Activated naive CD4-positive, alpha-beta T cell treated with anti-CD3 and anti-CD28 coated beads for 36 hours (primary cell): ENCODE measurements at regions of chr2 and their contacts with region 1.

Region 1: DNA sequence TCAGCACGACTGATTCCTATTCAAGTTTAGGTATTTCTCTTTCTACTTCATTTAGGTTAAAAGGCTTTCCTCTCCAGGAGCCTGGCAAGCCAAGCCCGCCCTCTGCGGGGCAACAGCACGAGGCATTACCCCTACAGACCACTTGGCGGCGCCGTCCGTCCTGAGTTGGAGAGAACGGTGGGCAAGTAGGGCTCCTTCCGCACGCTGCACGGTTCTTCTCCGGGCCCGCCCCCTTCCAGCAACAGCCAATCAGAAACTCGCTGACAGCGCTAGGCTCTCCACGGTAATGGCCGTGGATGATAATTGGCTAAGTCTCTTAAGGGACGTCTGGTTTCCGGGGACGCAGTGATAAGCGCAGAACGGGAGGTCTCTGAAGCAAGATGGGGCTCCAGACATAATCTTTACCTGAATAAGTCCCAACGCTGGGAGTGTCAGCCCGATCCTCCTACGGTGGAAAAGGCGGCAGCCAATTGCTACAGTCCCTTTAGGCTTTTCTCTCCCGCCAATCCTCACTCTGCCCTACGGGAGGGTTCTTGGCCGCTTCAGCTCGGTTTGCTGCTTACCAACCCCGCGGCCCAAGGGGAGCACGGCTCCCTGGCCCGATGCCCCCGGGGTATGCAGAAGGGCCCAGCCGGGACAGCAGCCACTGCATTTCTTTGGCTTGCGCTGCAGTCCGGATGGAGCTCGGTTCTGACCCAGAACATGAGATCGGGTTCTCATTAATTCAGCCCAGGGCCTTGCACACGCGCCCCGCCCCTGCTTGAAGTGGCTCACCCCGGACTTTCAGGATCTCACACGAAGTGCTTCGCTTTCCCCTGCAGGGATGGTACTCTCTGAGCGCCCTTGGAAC is 206.9 kb upstream of the PKDCC start:
- DNase-seq: peak; percentile 99
- H3K4me3 Mint-ChIP-seq: peak overlapping the region; percentile 92
- H3K27ac Mint-ChIP-seq: peak overlapping the region; percentile 86
- H3K4me1 Mint-ChIP-seq: peaks cover 5% of the 10 kb centered on the region
- H3K27me3 Mint-ChIP-seq: peaks cover 12% of the 10 kb centered on the region

Region 2: GRCh38 chr2:41853427-41854216 is 12.7 kb after region 1 on chr2:
- CTCF ChIA-PET with region 1: interaction called, 31 read pairs
- intact Hi-C with region 1: loop called (anchors 1 kb)
- DNase-seq: peak; percentile 27
- H3K4me3 Mint-ChIP-seq: no peak overlapping the region
- H3K27ac Mint-ChIP-seq: no peak overlapping the region
- H3K4me1 Mint-ChIP-seq: peaks cover 17% of the 10 kb centered on the region
- H3K27me3 Mint-ChIP-seq: peaks cover 16% of the 10 kb centered on the region

Region 3: GRCh38 chr2:41869542-41870264 is 28.8 kb after region 1 on chr2:
- CTCF ChIA-PET with region 1: interaction called, 38 read pairs
- intact Hi-C with region 1: loop called (anchors 1 kb)
- DNase-seq: peak; percentile 81
- H3K4me3 Mint-ChIP-seq: no peak overlapping the region
- H3K27ac Mint-ChIP-seq: no peak overlapping the region
- H3K4me1 Mint-ChIP-seq: no peaks in the 10 kb centered on the region
- H3K27me3 Mint-ChIP-seq: no peaks in the 10 kb centered on the region

Region 4: GRCh38 chr2:42086500-42086953 is 245.6 kb after region 1 on chr2:
- CTCF ChIA-PET with region 1: interaction called, 43 read pairs
- intact Hi-C with region 1: loop called (anchors 1 kb)
- DNase-seq: peak; percentile 59
- H3K4me3 Mint-ChIP-seq: no peak overlapping the region
- H3K27ac Mint-ChIP-seq: no peak overlapping the region
- H3K4me1 Mint-ChIP-seq: peaks cover 4% of the 10 kb centered on the region
- H3K27me3 Mint-ChIP-seq: no peaks in the 10 kb centered on the region

Region 5: DNA sequence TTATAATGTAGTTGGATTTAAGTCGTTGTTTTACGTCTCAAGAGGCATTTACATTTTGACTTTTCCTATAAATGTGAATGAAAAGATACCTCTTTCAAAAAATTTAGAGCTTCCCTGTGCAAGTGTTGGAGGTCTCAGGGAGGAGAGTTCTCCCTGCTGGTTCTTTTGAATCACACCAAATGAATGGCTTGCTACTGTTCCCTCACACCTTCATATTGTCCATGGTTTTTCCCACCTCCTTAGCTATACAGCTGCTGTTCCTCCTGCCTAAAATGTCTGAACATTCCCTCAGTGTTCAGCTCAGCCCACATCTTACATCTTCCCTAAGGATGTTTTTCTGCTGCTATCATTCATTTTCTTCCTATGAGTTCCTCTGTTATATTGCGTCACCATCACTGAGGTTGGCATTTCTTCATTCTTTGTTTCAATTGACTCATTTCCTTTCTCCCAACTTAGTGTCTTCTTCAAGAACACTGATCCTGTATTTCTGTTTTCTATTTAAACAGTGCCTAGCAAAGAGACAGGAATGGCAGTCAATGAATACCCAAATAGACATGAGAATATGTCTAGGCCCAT is 474.1 kb after region 1 on chr2:
- CTCF ChIA-PET with region 1: no interaction called
- intact Hi-C with region 1: loop called (anchors 1 kb)
- DNase-seq: no peak
- H3K4me3 Mint-ChIP-seq: no peak overlapping the region
- H3K27ac Mint-ChIP-seq: peak overlapping the region; percentile 80
- H3K4me1 Mint-ChIP-seq: peaks cover 24% of the 10 kb centered on the region
- H3K27me3 Mint-ChIP-seq: no peaks in the 10 kb centered on the region

Region 6: GRCh38 chr2:42663106-42663780 is 822.3 kb after region 1 on chr2:
- CTCF ChIA-PET with region 1: no interaction called
- intact Hi-C with region 1: loop called (anchors 10 kb)
- DNase-seq: peak; percentile 80
- H3K4me3 Mint-ChIP-seq: no peak overlapping the region
- H3K27ac Mint-ChIP-seq: peak overlapping the region; percentile 57
- H3K4me1 Mint-ChIP-seq: peaks cover 17% of the 10 kb centered on the region
- H3K27me3 Mint-ChIP-seq: no peaks in the 10 kb centered on the region